Left colon (tissue), 2 donors: ENCODE measurements at regions of chr11 and their contacts with region 1.

Region 1: DNA sequence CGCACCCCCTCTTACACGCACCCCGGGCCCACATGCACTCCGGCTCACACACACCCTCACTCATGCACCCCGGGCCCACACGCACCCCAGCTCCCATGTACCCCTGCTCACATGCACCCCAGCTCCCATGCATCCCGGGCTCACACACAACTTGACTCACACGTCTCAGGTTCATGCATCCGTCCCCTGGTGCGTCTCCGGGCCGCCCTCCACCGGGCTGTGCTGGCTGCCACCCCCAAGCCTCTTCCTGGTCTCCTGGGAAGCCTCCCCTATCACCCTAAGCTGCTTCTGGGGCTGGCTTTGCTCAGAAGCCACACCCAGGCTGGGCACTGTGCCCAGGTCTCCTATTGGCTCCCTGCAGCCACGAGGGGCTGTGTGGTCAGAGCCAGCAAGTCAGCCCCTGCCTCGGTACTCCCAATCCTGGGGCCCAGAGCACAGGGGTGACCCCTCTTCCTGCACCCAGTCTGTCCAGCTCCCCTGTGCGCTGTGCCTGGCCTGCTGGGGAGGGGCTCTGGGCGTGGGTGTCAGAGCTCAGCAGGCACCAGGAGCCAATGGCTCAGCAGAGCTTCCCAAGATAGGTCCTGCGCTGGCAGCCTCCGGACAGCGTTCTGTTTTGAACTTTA is 17.0 kb downstream of the TSPAN4 start:
- DNase-seq: peak; percentile 81 to 89
- ATAC-seq: peak; percentile 77

Region 2: GRCh38 chr11:924406-925157 is 65.0 kb after region 1 on chr11:
- intact Hi-C with region 1: no loop called
- DNase-seq: peak in 1 of 2 donors; percentile 18
- ATAC-seq: no peak

Region 3: GRCh38 chr11:1049431-1049891 is 189.8 kb after region 1 on chr11:
- intact Hi-C with region 1: loop called in 1 of 2 experiments (anchors 10 kb)
- DNase-seq: no peak
- ATAC-seq: no peak